Mucosa of descending colon (tissue), 3 donors: ENCODE measurements at regions of chr6 and their contacts with region 1.

Region 1: GRCh38 chr6:17156112-17156921 is 54.5 kb downstream of the STMND1 start:
- DNase-seq: peak in 1 of 3 donors; percentile 92
- ATAC-seq: peak; percentile 37
- H3K4me3 ChIP-seq: no peak overlapping the region
- H3K4me1 ChIP-seq: no peaks in the 10 kb centered on the region
- CTCF ChIP-seq: peak; percentile 68

Region 2: DNA sequence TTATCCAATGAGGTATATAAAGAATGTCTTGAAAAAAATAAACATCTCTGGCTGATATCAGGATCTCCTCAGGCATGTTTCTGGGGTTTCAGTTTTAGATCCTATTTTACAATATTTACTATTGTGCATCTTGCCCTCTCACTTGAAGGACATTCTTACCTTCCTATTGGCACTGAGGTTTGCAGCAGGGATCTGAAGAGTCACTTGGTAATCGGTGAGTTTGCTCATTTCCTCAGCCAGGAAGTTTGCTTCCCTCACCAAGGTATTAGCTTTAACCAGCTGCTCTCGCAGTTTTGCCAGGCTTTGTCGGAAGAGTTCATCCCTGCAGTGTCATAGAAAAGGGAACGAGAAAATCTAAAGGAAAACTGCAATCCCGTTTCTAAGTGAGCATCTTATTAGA is 652.3 kb after region 1 on chr6:
- intact Hi-C with region 1: loop called in 1 of 2 experiments (anchors 10 kb)
- DNase-seq: no peak
- ATAC-seq: no peak
- H3K4me3 ChIP-seq: no peak overlapping the region
- H3K4me1 ChIP-seq: no peaks in the 10 kb centered on the region
- CTCF ChIP-seq: no peak